Cardiac septum (tissue), 1 donor: ENCODE measurements at regions of chr1 and their contacts with region 1.

Region 1: GRCh38 chr1:28050776-28051175 is 37.6 kb downstream of the EYA3 start:
- DNase-seq: no peak

Region 2: DNA sequence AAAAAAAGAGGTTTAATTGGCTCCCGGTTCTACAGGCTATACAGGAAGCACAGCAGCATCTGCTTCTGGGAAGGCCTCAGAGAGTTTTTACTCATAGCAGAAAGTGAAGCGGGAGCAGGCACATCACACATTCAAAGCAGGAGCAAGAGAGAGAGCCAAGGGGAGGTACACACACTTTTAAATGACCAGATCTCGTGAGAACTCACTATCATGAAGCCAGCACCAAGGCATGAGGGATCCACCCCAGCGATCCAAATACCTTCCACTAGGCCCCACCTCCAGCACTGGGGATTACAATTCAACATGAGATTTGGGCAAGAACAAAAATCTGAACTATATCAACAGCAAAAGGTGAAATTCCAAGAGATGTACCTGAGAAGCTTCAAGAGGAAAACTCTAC is 345.8 kb before region 1 on chr1:
- intact Hi-C with region 1: no loop called
- DNase-seq: no peak

Region 3: DNA sequence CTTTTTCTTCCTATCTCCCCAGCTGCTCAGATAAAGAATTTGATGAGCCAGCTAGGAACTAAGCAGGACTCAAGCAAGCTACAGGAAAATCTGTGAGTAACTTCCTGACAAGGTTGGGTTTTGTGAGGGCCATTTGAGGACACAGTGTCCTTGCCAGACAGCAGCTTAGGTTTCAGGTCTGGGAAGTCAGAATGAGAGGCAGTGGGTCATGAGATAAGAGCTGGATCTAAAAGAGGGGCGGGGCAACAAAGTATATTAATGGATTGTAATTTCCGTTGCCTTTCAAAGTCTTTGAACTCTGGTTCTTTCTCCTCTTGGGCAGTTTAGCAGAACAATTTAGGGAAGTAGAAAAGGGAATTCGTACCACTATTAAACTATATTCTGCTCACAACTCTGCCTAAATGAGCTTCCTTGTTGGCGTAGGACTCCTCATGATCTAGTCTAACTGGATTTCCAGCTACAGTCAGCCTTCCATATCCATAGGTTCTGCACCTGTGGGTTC is 261.2 kb before region 1 on chr1:
- intact Hi-C with region 1: no loop called
- DNase-seq: no peak

Region 4: GRCh38 chr1:27968694-27969093 is 82.1 kb before region 1 on chr1:
- intact Hi-C with region 1: no loop called
- DNase-seq: no peak

Region 5: GRCh38 chr1:28002600-28002999 is 48.2 kb before region 1 on chr1:
- intact Hi-C with region 1: loop called (anchors 5 kb)
- DNase-seq: no peak

Region 6: DNA sequence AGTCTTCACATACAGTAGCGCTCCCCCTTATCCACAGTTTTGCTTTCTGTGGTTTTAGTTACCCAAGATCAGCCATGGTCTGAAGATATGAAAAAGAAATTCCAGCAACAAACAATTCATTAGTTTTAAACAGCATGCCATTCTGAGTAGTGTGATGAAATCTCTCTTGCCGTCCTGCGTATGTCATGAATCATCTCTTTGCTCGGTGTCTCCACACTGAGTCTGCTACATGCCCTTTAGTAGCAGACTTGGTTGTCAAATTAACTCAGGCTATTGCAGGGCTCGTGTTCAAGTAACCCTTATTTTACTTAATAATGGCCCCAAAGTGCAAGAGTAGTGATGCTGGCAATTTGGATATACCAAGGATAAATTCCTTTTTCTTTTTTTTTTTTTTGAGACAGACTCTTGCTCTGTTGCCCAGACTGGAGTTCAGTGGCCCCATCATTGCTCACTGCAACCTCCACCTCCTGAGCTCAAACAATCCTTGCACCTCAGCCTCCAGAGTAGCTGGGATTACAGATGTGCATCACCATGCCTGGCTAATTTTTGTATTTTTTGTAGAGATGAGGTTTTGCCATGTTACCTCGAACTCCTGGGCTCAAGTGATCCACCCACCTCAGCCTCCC is 341.4 kb after region 1 on chr1:
- intact Hi-C with region 1: no loop called
- DNase-seq: no peak